GM12878 (cell line): ENCODE measurements at regions of chr5 and their contacts with region 1.

Region 1: DNA sequence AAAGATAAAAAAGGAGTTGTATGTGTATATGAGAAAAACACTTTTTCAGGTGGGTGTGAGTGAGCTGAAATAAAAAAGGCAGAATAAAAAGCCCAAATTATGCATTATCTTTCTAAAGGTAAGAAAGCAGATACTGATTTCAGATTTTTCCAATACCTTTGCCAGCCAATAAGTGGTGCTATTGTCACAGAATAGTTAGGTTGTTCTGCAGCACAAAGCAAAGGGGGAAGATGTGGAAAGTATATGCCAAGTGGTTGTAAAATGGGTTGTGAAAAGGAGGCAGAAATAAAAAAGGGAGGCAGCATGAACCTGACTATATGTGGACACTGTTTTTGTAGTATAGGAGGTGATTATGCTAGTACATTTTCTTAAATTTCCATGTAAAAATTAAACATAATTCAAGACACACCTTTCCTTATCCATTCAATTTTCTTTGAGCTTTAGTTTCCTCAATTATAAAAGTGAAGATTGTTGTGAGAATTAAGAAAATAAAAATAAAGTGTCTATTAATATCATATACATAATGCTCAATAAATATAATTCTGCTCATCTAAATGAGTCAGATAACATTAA is 106.7 kb downstream of the SMIM15 start:
- DNase-seq: peak; percentile 15
- ATAC-seq: peak; percentile 80
- H3K4me3 ChIP-seq: no peak overlapping the region
- H3K27ac ChIP-seq: no peak overlapping the region
- H3K4me1 ChIP-seq: peaks cover 3% of the 10 kb centered on the region; the same call in 1 of the 2 replicates
- H3K27me3 ChIP-seq: no peaks in the 10 kb centered on the region
- CTCF ChIP-seq: peak; percentile 57 to 80 (median 63); a peak in 5 of 6 replicates
- EP300 ChIP-seq: no peak
- POLR2A ChIP-seq: no peak
- RAD21 ChIP-seq: peak; percentile 96

Region 2: DNA sequence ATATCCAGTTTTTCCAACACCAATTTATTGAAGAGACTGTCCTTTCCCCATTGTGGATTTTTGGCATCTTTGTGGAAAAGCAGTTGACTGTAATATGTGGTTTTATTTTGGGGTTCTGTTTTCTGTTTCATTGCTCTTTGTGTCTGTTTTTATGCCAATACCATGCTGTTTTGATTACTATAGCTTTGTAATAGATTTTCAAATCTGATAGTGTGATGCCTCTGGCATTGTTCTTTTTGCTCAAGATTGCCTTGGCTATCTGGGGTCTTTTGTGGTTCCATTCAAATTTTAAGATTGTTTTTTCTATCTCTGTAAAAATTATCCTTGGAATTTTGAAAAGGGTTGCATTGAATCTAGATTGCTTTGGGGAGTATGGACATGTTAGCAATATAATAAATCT is 11.0 kb before region 1 on chr5:
- CTCF ChIA-PET with region 1: interaction called, 11 read pairs
- POLR2A ChIA-PET with region 1: no interaction called
- RAD21 ChIA-PET with region 1: no interaction called
- SMC1A ChIA-PET with region 1: interaction called, 5 read pairs
- in situ Hi-C with region 1: no loop called
- intact Hi-C with region 1: no loop called
- DNase-seq: no peak
- ATAC-seq: no peak
- H3K4me3 ChIP-seq: no peak overlapping the region
- H3K27ac ChIP-seq: no peak overlapping the region
- H3K4me1 ChIP-seq: no peaks in the 10 kb centered on the region
- H3K27me3 ChIP-seq: no peaks in the 10 kb centered on the region
- CTCF ChIP-seq: no peak
- EP300 ChIP-seq: no peak
- POLR2A ChIP-seq: no peak
- RAD21 ChIP-seq: no peak

Region 3: GRCh38 chr5:61162010-61162831 is 106.7 kb after region 1 on chr5 and contains the start of gene SMIM15:
- CTCF ChIA-PET with region 1: interaction called, 3 read pairs
- POLR2A ChIA-PET with region 1: no interaction called
- RAD21 ChIA-PET with region 1: interaction called, 3 read pairs
- SMC1A ChIA-PET with region 1: interaction called, 4 read pairs
- in situ Hi-C with region 1: no loop called
- intact Hi-C with region 1: loop called (anchors 5 kb)
- DNase-seq: peak; percentile 54
- ATAC-seq: peak; percentile 94
- H3K4me3 ChIP-seq: peak within 1 kb of the TSS; percentile 73
- H3K27ac ChIP-seq: peak within 1 kb of the TSS; percentile 98
- H3K4me1 ChIP-seq: no peaks in the 10 kb centered on the region; the same call in 1 of the 2 replicates
- H3K27me3 ChIP-seq: no peaks in the 10 kb centered on the region
- CTCF ChIP-seq: no peak
- EP300 ChIP-seq: no peak
- POLR2A ChIP-seq: peak; percentile 99
- RAD21 ChIP-seq: no peak
- polyA plus RNA-seq, gene SMIM15: 13.8 to 18.7 TPM

Region 4: GRCh38 chr5:61408476-61409168 is 353.1 kb after region 1 on chr5:
- CTCF ChIA-PET with region 1: interaction called, 3 read pairs
- POLR2A ChIA-PET with region 1: no interaction called
- RAD21 ChIA-PET with region 1: no interaction called
- SMC1A ChIA-PET with region 1: no interaction called
- in situ Hi-C with region 1: no loop called
- intact Hi-C with region 1: loop called (anchors 10 kb)
- DNase-seq: peak; percentile 61
- ATAC-seq: peak; percentile 99
- H3K4me3 ChIP-seq: peak overlapping the region; percentile 45; the same call in 1 of the 2 replicates
- H3K27ac ChIP-seq: no peak overlapping the region
- H3K4me1 ChIP-seq: no peaks in the 10 kb centered on the region; the same call in 1 of the 2 replicates
- H3K27me3 ChIP-seq: no peaks in the 10 kb centered on the region
- CTCF ChIP-seq: no peak
- EP300 ChIP-seq: peak; percentile 78 to 82; a peak in 3 of 4 replicates
- POLR2A ChIP-seq: no peak
- RAD21 ChIP-seq: no peak

Region 5: DNA sequence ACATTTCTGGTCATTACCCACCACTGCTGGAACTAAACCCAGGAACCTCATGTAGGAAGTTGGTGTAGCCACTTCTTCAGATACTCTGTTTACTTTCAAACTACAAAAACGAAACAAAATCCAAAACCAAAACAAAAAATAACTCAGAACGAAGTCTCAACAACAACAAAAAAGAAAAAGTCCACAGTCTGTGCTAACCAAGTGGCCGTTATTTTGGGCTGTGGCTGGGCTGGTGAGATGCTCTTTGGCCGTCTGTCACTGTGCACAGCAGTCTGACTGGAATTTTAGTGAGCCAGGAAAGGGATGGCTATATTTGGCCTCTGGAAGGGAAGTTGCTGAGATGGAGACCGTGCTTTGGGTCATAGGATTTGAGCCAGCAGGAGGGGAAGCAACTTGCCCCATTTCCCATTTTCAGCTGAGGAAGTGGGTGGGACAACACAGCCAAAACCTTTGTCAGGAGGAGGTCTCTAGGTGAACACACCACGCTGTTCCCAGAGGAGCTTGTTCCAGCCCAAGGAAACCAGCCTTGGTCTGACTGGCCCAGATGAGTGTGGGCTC is 610.6 kb after region 1 on chr5:
- CTCF ChIA-PET with region 1: interaction called, 95 read pairs
- POLR2A ChIA-PET with region 1: no interaction called
- RAD21 ChIA-PET with region 1: no interaction called
- SMC1A ChIA-PET with region 1: no interaction called
- in situ Hi-C with region 1: loop called (anchors 5 kb)
- intact Hi-C with region 1: no loop called
- DNase-seq: no peak
- ATAC-seq: no peak; the same call in 2 of the 3 replicates
- H3K4me3 ChIP-seq: no peak overlapping the region
- H3K27ac ChIP-seq: no peak overlapping the region
- H3K4me1 ChIP-seq: no peaks in the 10 kb centered on the region
- H3K27me3 ChIP-seq: no peaks in the 10 kb centered on the region; a peak in 1 of 4 replicates
- CTCF ChIP-seq: no peak
- EP300 ChIP-seq: no peak
- POLR2A ChIP-seq: no peak
- RAD21 ChIP-seq: no peak

Region 6: DNA sequence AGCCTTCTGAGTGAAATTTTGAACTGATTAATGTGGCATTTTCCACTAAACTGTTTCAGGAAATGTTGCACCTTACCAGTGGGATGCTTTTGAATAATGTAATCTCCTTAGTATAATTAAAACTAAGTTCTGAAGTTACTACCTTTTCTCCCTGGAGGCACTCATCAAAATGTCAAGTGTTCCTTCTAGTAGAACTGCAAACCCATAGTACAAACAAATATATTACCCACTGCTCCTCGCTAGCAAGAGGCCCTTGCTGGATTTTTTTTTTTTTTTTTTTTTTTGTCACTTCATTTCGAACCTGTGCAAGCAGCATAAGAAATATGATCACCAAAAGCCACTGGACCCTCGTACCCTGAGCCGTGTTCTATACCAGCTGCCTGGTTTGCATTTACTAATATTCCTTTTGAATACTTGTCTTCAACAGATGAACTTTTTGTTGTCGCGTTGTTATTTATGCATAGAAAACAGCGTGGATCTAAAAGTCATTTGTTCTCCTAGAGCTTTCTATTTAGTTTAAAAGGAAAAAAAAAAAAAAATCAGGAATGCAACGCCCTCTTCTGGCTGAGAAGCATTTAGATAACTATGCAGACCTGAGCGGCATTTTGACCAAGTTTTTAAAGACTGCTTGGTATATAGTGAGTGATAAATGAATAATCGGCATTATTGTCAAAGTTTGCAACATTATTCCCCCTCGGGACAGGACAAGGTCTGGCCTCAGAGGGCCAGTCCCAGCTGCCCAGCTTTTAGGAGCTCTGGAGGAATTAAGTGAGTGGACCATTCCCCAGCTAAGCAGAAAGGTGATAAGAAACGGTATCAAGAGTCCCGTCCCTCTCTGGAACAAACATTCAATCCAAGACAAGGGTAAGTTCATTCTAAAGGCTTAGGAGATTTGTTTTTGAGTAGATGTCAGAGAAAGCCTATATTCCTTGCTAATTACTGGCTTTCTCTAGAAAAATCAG is 1088.0 kb after region 1 on chr5:
- CTCF ChIA-PET with region 1: interaction called, 12 read pairs
- POLR2A ChIA-PET with region 1: no interaction called
- RAD21 ChIA-PET with region 1: no interaction called
- SMC1A ChIA-PET with region 1: no interaction called
- in situ Hi-C with region 1: no loop called
- intact Hi-C with region 1: no loop called
- DNase-seq: no peak
- ATAC-seq: peak; percentile 48; the same call in 1 of the 3 replicates
- H3K4me3 ChIP-seq: no peak overlapping the region
- H3K27ac ChIP-seq: no peak overlapping the region
- H3K4me1 ChIP-seq: no peaks in the 10 kb centered on the region
- H3K27me3 ChIP-seq: 0 out of 4 replicates have a peak, but pooled peaks cover 0 to 2% of the 10 kb centered on the region in 2 experiments
- CTCF ChIP-seq: peak in 2 of 3 experiments; percentile 31 to 45; a peak in 4 of 6 replicates
- EP300 ChIP-seq: no peak
- POLR2A ChIP-seq: no peak
- RAD21 ChIP-seq: 0 out of 2 replicates have a peak, but pooled peaks have one; percentile 10